A673 (cell line): ENCODE measurements at regions of chr2 and their contacts with region 1.

Region 1: GRCh38 chr2:178761759-178762371 is 45.4 kb downstream of the TTN start:
- DNase-seq: peak; percentile 52
- H3K4me3 ChIP-seq: no peak overlapping the region
- H3K27ac ChIP-seq: no peak overlapping the region
- H3K4me1 ChIP-seq: no peaks in the 10 kb centered on the region
- H3K27me3 ChIP-seq: peaks cover 36% of the 10 kb centered on the region
- CTCF ChIP-seq: peak; percentile 78

Region 2: GRCh38 chr2:178819147-178819875 is 57.4 kb after region 1 on chr2:
- CTCF ChIA-PET with region 1: no interaction called
- POLR2A ChIA-PET with region 1: no interaction called
- intact Hi-C with region 1: no loop called
- DNase-seq: no peak
- H3K4me3 ChIP-seq: no peak overlapping the region
- H3K27ac ChIP-seq: no peak overlapping the region
- H3K4me1 ChIP-seq: no peaks in the 10 kb centered on the region
- H3K27me3 ChIP-seq: no peaks in the 10 kb centered on the region
- CTCF ChIP-seq: no peak

Region 3: DNA sequence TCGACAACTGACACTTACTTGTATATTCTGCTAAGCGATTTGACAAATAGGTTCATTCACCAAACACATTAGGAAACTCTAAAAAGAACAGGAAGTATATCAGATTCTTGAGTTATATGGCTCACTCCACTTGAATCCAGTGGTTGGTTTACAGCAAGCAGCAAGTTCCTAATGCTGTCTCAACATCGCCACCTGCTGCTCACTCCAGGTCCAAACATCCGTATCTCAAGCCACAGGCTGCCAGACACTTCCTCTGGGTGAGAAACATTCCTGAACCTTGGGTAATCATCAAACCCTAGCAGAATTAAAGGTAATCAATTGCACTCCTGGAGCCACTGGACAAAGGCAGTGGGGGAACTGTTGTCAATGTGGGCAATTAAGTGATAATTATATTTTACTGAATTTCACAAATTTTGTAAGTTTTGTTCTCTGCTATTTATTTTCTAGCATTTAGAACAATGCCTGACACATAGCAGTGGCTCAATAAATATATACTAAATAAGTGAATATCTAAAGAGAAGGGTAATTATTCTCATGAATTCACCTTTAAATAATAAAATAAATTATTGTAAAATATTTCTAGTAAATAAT is 152.5 kb after region 1 on chr2:
- CTCF ChIA-PET with region 1: no interaction called
- POLR2A ChIA-PET with region 1: no interaction called
- intact Hi-C with region 1: loop called (anchors 10 kb)
- DNase-seq: peak; percentile 75
- H3K4me3 ChIP-seq: no peak overlapping the region
- H3K27ac ChIP-seq: no peak overlapping the region
- H3K4me1 ChIP-seq: no peaks in the 10 kb centered on the region
- H3K27me3 ChIP-seq: peaks cover 18% of the 10 kb centered on the region
- CTCF ChIP-seq: peak; percentile 91

Region 4: GRCh38 chr2:179302764-179303571 is 541.1 kb after region 1 on chr2:
- CTCF ChIA-PET with region 1: no interaction called
- POLR2A ChIA-PET with region 1: no interaction called
- intact Hi-C with region 1: no loop called
- DNase-seq: no peak
- H3K4me3 ChIP-seq: no peak overlapping the region
- H3K27ac ChIP-seq: no peak overlapping the region
- H3K4me1 ChIP-seq: no peaks in the 10 kb centered on the region
- H3K27me3 ChIP-seq: no peaks in the 10 kb centered on the region
- CTCF ChIP-seq: no peak